GM12878 (cell line): ENCODE measurements at regions of chr6 and their contacts with region 1.

Region 1: DNA sequence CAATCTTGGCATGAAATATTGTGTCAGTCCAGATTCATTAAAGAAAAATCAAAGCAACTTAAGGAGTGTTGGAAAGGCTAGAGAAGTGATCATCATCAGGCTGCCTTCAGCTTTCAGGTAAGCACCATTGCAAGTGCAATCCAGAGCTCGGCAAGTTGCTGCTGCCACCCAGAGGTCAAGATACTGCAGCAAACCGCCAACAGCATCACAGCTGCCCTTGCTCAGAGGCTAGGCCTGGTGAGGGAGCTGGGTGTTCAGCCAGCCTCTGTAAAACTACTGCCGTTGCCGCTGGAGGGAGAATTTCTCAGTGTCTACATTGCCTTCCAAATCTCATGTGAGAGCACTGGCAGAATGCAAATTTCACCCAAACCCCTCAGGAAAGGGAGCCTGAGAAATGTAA is 5.8 kb upstream of the SYNE1 start:
- DNase-seq: no peak
- ATAC-seq: peak; percentile 96
- H3K4me3 ChIP-seq: no peak overlapping the region
- H3K27ac ChIP-seq: no peak overlapping the region
- H3K4me1 ChIP-seq: no peaks in the 10 kb centered on the region
- H3K27me3 ChIP-seq: no peaks in the 10 kb centered on the region; a peak in 1 of 4 replicates
- CTCF ChIP-seq: peak; percentile 48 to 56 (median 51); a peak in 5 of 6 replicates
- EP300 ChIP-seq: no peak
- POLR2A ChIP-seq: no peak
- RAD21 ChIP-seq: peak; percentile 42

Region 2: DNA sequence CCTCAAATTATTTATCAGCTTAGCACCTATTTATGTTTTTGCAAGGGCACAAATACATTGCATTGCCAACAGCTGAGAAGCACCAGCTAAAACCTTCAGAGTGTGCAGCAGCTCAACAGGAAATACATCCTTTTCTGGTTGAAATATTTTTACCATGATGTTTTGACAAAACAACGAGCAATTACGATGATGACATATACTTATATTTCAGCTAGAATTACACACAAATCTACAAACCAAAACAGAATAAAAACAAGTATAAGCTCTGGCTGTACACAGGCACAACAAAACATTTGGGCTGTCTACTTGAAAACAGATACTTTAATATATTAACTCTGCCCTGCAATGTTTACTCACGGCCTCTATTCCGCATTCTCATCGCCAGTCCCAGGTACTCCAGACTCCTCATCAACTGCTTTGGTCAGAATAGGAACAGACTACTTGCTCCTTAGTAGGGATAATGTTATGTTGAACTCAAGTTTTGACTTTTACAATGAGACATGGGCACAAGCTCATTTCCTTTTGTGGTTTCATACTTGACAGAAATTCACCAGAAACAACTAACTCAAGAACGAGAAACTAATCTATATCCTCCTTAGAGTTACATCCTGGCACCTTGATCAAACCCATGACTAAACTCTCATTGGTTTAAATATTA is 457.9 kb before region 1 on chr6:
- CTCF ChIA-PET with region 1: no interaction called
- POLR2A ChIA-PET with region 1: no interaction called
- RAD21 ChIA-PET with region 1: no interaction called
- SMC1A ChIA-PET with region 1: no interaction called
- in situ Hi-C with region 1: no loop called
- intact Hi-C with region 1: no loop called
- DNase-seq: peak; percentile 32
- ATAC-seq: peak; percentile 83
- H3K4me3 ChIP-seq: peak overlapping the region; percentile 38; the same call in 1 of the 2 replicates
- H3K27ac ChIP-seq: peak overlapping the region; percentile 55
- H3K4me1 ChIP-seq: peaks cover 6% of the 10 kb centered on the region
- H3K27me3 ChIP-seq: no peaks in the 10 kb centered on the region
- CTCF ChIP-seq: no peak
- EP300 ChIP-seq: no peak
- POLR2A ChIP-seq: no peak
- RAD21 ChIP-seq: no peak

Region 3: DNA sequence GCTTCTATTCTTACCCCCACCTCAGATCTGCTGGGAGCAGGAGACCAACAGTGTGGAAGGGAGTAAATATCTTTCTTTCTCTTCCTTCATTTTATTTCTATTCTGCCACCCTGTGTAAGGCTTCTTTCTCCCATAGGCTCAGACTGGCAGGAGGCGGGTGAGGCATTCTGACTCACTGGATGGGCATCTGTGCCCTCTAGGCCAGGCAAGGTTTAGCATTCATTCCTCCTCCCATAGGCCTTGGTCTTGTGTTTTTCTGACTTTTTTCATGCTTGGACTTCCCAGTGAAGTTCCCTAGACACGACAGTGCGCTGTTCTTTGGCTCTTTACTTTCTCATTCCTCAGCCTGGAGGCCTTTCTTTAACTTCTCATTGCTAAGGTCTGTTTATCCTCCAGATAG is 241.0 kb before region 1 on chr6:
- CTCF ChIA-PET with region 1: no interaction called
- POLR2A ChIA-PET with region 1: no interaction called
- RAD21 ChIA-PET with region 1: no interaction called
- SMC1A ChIA-PET with region 1: no interaction called
- in situ Hi-C with region 1: no loop called
- intact Hi-C with region 1: no loop called
- DNase-seq: no peak
- ATAC-seq: no peak; the same call in 2 of the 3 replicates
- H3K4me3 ChIP-seq: no peak overlapping the region
- H3K27ac ChIP-seq: no peak overlapping the region
- H3K4me1 ChIP-seq: no peaks in the 10 kb centered on the region
- H3K27me3 ChIP-seq: no peaks in the 10 kb centered on the region
- CTCF ChIP-seq: no peak
- EP300 ChIP-seq: no peak
- POLR2A ChIP-seq: no peak
- RAD21 ChIP-seq: no peak

Region 4: GRCh38 chr6:152484806-152485205 is 158.2 kb before region 1 on chr6:
- CTCF ChIA-PET with region 1: interaction called, 4 read pairs
- POLR2A ChIA-PET with region 1: no interaction called
- RAD21 ChIA-PET with region 1: interaction called, 3 read pairs
- SMC1A ChIA-PET with region 1: no interaction called
- in situ Hi-C with region 1: no loop called
- intact Hi-C with region 1: loop called (anchors 5 kb)
- DNase-seq: no peak
- ATAC-seq: no peak
- H3K4me3 ChIP-seq: no peak overlapping the region
- H3K27ac ChIP-seq: no peak overlapping the region
- H3K4me1 ChIP-seq: no peaks in the 10 kb centered on the region
- H3K27me3 ChIP-seq: no peaks in the 10 kb centered on the region
- CTCF ChIP-seq: no peak
- EP300 ChIP-seq: no peak
- POLR2A ChIP-seq: no peak
- RAD21 ChIP-seq: no peak

Region 5: DNA sequence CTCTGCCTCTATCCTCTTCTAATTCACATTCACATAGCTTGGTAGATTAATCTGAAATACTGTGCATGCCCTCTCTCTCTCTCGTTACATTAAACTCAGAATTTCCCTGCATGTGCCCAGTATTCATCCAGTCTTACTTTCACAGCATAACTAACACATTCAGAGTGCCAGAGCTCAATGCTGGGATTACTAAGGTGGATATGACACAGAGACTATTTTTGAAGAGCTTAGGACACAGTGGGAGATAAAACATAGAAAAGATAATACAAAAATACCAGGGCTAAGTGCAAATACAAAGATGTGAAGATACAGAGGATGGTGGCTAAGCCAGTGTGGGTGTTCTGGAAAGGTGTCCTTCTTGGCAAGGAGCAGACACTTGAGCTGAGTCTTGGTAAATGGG is 12.2 kb before region 1 on chr6:
- CTCF ChIA-PET with region 1: interaction called, 14 read pairs
- POLR2A ChIA-PET with region 1: no interaction called
- RAD21 ChIA-PET with region 1: no interaction called
- SMC1A ChIA-PET with region 1: no interaction called
- in situ Hi-C with region 1: no loop called
- intact Hi-C with region 1: no loop called
- DNase-seq: no peak
- ATAC-seq: no peak
- H3K4me3 ChIP-seq: no peak overlapping the region
- H3K27ac ChIP-seq: no peak overlapping the region
- H3K4me1 ChIP-seq: no peaks in the 10 kb centered on the region
- H3K27me3 ChIP-seq: peaks cover 0 to 2% of the 10 kb centered on the region in 2 experiments; a peak in 2 of 4 replicates
- CTCF ChIP-seq: no peak
- EP300 ChIP-seq: no peak
- POLR2A ChIP-seq: no peak
- RAD21 ChIP-seq: no peak